ENCODE measurements at regions of chr11 and their contacts with region 1.

Region 1: GRCh38 chr11:57800444-57801182 is 39.0 kb downstream of the CTNND1 start:
- DNase-seq: no peak
- ATAC-seq: peak; percentile 93
- H3K4me3 Mint-ChIP-seq: no peak overlapping the region
- H3K27ac Mint-ChIP-seq: peak overlapping the region; percentile 75
- H3K4me1 Mint-ChIP-seq: peaks cover 27% of the 10 kb centered on the region
- H3K27me3 Mint-ChIP-seq: no peaks in the 10 kb centered on the region

Region 2: GRCh38 chr11:57644748-57645688 is 155.6 kb before region 1 on chr11:
- CTCF ChIA-PET with region 1: interaction called, 15 read pairs
- DNase-seq: peak; percentile 90
- ATAC-seq: peak; percentile 83
- H3K4me3 Mint-ChIP-seq: no peak overlapping the region
- H3K27ac Mint-ChIP-seq: no peak overlapping the region
- H3K4me1 Mint-ChIP-seq: peaks cover 33% of the 10 kb centered on the region
- H3K27me3 Mint-ChIP-seq: peaks cover 64% of the 10 kb centered on the region

Region 3: DNA sequence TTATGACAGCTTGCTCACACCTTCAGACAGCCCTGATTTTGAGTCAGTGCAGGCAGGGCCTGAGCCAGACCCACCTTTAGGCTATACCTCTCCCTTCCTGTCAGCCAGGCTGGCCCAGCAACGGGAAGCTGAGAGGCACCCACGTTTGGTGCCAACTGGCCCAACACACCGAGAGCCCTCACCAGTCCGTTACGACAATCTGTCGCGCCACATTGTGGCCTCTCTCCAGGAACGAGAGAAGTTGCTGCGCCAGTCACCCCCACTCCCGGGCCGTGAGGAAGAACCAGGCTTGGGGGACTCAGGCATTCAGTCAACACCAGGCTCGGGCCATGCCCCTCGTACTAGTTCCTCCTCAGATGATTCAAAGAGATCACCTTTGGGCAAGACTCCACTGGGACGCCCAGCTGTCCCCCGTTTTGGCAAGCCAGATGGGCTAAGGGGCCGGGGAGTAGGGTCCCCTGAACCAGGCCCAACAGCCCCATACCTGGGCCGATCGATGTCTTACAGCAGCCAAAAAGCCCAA is 101.7 kb before region 1 on chr11:
- CTCF ChIA-PET with region 1: interaction called, 16 read pairs
- DNase-seq: no peak
- ATAC-seq: peak; percentile 27
- H3K4me3 Mint-ChIP-seq: no peak overlapping the region
- H3K27ac Mint-ChIP-seq: no peak overlapping the region
- H3K4me1 Mint-ChIP-seq: no peaks in the 10 kb centered on the region
- H3K27me3 Mint-ChIP-seq: no peaks in the 10 kb centered on the region

Region 4: DNA sequence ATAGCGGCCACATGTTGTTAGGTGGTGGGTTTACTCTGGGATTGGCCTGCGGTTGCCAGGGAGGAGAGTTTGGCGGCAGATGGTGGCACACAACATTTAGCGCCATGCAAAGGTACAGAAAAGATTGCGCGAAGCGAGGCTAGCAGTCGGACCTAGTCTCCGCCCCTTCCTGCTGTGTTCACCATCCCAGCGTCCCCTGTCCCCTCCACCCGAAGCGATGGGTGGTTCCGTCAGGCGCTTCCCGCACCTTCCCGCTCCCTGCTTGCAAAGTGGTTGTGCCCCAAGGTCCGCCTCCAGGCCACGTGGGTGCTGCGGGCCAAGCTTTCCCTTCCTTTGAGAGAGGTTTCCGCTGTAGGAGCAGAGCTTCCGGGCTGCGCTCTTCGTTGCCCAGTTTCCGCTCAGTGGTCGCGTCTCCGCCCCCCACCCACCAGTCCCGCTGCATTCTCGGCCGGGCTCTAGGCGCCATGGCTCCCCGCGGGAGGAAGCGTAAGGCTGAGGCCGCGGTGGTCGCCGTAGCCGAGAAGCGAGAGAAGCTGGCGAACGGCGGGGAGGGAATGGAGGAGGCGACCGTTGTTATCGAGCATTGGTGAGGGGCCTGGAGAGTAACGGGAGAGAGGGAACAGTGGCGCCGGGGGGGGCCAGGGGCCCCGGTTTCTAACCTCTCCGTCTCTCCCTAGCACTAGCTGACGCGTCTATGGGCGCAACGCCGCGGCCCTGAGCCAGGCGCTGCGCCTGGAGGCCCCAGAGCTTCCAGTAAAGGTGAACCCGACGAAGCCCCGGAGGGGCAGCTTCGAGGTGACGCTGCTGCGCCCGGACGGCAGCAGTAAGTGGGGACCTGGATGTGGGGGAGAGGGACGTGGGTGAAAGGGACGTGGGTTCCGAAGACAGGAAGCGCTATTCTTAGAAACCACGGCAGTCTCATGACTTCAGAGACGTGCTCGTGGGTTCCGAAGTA is 59.2 kb before region 1 on chr11 and contains the start of gene SELENOH:
- CTCF ChIA-PET with region 1: interaction called, 29 read pairs
- DNase-seq: peak; percentile 97
- ATAC-seq: peak; percentile 91
- H3K4me3 Mint-ChIP-seq: peak within 1 kb of the TSS; percentile 86
- H3K27ac Mint-ChIP-seq: peak within 1 kb of the TSS; percentile 93
- H3K4me1 Mint-ChIP-seq: peaks cover 25% of the 10 kb centered on the region
- H3K27me3 Mint-ChIP-seq: no peaks in the 10 kb centered on the region
- total RNA-seq, gene SELENOH: 114 to 145 TPM

Region 5: GRCh38 chr11:57761301-57762234 is 39.0 kb before region 1 on chr11 and contains the start of gene CTNND1:
- CTCF ChIA-PET with region 1: interaction called, 18 read pairs
- DNase-seq: no peak
- ATAC-seq: no peak
- H3K4me3 Mint-ChIP-seq: no peak within 1 kb of the TSS
- H3K27ac Mint-ChIP-seq: no peak within 1 kb of the TSS
- H3K4me1 Mint-ChIP-seq: peaks cover 2% of the 10 kb centered on the region
- H3K27me3 Mint-ChIP-seq: peaks cover 3% of the 10 kb centered on the region
- total RNA-seq, gene CTNND1: 5.0 to 7.7 TPM

Region 6: GRCh38 chr11:57834852-57835251 is 34.2 kb after region 1 on chr11:
- CTCF ChIA-PET with region 1: no interaction called
- DNase-seq: no peak
- ATAC-seq: no peak
- H3K4me3 Mint-ChIP-seq: no peak overlapping the region
- H3K27ac Mint-ChIP-seq: no peak overlapping the region
- H3K4me1 Mint-ChIP-seq: no peaks in the 10 kb centered on the region
- H3K27me3 Mint-ChIP-seq: peaks cover 38% of the 10 kb centered on the region